ENCODE measurements at regions of chr13 and their contacts with region 1.

Region 1: DNA sequence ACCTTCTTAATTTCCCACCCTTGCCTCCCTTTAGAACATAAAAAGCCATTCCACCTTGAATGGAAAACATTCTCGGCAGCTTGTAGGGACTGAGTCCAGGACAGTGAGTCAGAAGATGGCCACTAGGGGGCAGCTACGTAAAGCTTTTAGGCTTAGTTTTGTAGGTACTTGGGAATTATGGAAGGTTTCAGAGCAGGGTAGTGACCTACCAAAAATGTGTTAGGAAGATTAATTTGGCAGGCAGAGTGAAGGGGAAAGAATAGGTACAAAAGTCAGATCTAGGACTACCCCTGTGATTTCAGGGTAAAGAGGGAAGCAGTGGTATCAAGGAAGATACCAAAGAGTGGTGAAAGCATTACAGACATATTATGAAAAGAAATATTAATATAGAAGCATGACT is 198.4 kb downstream of the NDFIP2 start:
- DNase-seq: peak; percentile 58
- H3K4me3 ChIP-seq: no peak overlapping the region
- H3K27ac ChIP-seq: no peak overlapping the region
- H3K4me1 ChIP-seq: peaks cover 33% of the 10 kb centered on the region
- H3K27me3 ChIP-seq: no peaks in the 10 kb centered on the region
- CTCF ChIP-seq: peak; percentile 80 to 83

Region 2: GRCh38 chr13:79548902-79549301 is 130.4 kb before region 1 on chr13:
- CTCF ChIA-PET with region 1: no interaction called
- dilution Hi-C with region 1: no loop called
- in situ Hi-C with region 1: no loop called
- intact Hi-C with region 1: loop called (anchors 1 kb)
- DNase-seq: peak; percentile 23
- H3K4me3 ChIP-seq: no peak overlapping the region
- H3K27ac ChIP-seq: peak overlapping the region; percentile 3
- H3K4me1 ChIP-seq: peaks cover 5% of the 10 kb centered on the region
- H3K27me3 ChIP-seq: no peaks in the 10 kb centered on the region
- CTCF ChIP-seq: peak; percentile 48 to 55

Region 3: GRCh38 chr13:79637133-79637763 is 42.1 kb before region 1 on chr13:
- CTCF ChIA-PET with region 1: no interaction called
- dilution Hi-C with region 1: no loop called
- in situ Hi-C with region 1: no loop called
- intact Hi-C with region 1: no loop called
- DNase-seq: no peak
- H3K4me3 ChIP-seq: no peak overlapping the region
- H3K27ac ChIP-seq: no peak overlapping the region
- H3K4me1 ChIP-seq: peaks cover under 1% of the 10 kb centered on the region
- H3K27me3 ChIP-seq: no peaks in the 10 kb centered on the region
- CTCF ChIP-seq: no peak

Region 4: DNA sequence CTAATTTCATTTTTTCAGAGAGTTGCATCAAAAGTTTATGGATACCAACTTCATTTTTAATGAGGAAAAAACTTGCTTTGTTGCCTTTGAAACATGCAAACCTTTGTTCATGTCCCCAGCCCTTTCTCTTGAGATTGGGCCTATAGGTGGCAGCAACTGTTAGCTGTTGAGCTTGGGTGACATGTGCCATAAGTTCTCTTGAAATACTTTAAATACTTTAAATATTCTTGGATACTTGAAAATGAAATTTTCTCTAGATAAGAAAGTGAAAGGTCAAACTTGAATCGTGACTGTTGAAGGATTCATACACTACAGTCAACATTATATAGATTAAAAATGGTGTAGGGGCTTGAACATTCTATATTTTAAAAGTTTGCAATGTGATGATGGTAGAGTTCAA is 96.5 kb after region 1 on chr13:
- CTCF ChIA-PET with region 1: interaction called, 5 read pairs
- dilution Hi-C with region 1: no loop called
- in situ Hi-C with region 1: no loop called
- intact Hi-C with region 1: loop called (anchors 1 kb)
- DNase-seq: peak; percentile 46
- H3K4me3 ChIP-seq: no peak overlapping the region
- H3K27ac ChIP-seq: no peak overlapping the region
- H3K4me1 ChIP-seq: peaks cover 29% of the 10 kb centered on the region
- H3K27me3 ChIP-seq: no peaks in the 10 kb centered on the region
- CTCF ChIP-seq: peak; percentile 53 to 76

Region 5: DNA sequence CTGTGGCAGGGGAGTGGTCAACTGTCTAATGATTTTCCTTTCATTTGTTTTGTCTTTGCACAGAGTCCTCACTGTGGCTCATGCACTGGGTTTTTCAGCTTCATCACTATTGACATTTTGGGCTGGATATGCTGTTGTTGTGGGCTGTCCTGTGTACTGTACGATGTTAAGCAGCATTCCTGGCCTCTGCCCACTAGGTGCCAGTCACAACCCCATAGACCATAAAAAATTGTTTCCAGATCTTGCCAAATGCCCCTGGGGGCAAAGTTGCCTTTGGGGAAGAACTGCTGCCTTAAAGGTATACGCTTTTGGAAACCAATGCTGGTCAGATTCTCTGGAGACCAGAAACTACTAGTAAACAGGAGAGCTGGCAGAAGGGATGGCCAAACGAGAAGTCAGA is 351.2 kb after region 1 on chr13:
- CTCF ChIA-PET with region 1: no interaction called
- dilution Hi-C with region 1: no loop called
- in situ Hi-C with region 1: no loop called
- intact Hi-C with region 1: loop called (anchors 5 kb)
- DNase-seq: peak; percentile 65
- H3K4me3 ChIP-seq: no peak overlapping the region
- H3K27ac ChIP-seq: no peak overlapping the region
- H3K4me1 ChIP-seq: peaks cover 7% of the 10 kb centered on the region
- H3K27me3 ChIP-seq: no peaks in the 10 kb centered on the region
- CTCF ChIP-seq: peak; percentile 47 to 50

Region 6: GRCh38 chr13:80923907-80924306 is 1244.6 kb after region 1 on chr13:
- CTCF ChIA-PET with region 1: no interaction called
- dilution Hi-C with region 1: no loop called
- in situ Hi-C with region 1: no loop called
- intact Hi-C with region 1: loop called (anchors 5 kb)
- DNase-seq: no peak
- H3K4me3 ChIP-seq: no peak overlapping the region
- H3K27ac ChIP-seq: no peak overlapping the region
- H3K4me1 ChIP-seq: no peaks in the 10 kb centered on the region
- H3K27me3 ChIP-seq: no peaks in the 10 kb centered on the region
- CTCF ChIP-seq: peak in 1 of 2 donors; percentile 36